ENCODE measurements at regions of chr11 and their contacts with region 1.

Region 1: DNA sequence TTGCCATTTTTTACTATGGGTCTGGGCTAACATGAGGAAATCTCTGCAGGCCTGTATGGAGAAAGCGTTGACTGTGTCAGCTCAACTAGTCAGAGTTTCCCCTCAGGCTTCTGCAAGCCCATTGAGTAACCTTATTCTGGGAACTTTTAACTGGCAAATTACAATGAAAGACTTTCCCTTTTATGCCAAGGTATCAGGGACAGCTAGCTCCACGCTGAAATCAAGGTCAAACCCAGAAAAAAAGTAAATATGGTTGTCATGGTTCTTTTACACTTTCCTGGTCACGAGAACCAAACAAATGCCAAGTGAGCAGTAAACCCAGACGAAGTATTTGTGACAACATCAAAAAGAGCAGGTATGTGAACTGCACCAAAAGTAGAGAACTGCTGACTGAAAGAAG is 13.8 kb downstream of the OSBP start:
- DNase-seq: no peak
- H3K4me3 ChIP-seq: no peak overlapping the region
- H3K27ac ChIP-seq: no peak overlapping the region
- H3K4me1 ChIP-seq: no peaks in the 10 kb centered on the region
- H3K27me3 ChIP-seq: no peaks in the 10 kb centered on the region
- CTCF ChIP-seq: no peak

Region 2: DNA sequence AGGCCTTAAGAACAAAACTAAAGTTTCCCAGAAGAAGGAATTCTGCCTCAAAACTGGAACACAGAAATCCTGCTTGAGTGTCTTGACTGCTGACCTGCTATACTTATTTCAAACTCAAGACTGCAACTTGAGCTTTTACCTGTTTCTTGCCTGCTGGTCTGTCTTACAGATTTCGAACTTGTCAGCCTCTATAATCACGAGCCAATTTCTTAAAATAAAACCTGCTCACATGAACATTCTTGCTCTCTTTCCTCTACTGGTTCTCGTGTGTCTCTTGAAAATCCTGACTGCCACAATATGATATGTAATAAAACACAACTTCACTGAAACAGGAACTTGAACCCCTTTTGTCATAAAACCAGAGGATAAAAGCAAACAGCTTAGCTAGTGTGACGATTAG is 53.1 kb after region 1 on chr11:
- CTCF ChIA-PET with region 1: no interaction called
- POLR2A ChIA-PET with region 1: no interaction called
- intact Hi-C with region 1: loop called (anchors 5 kb)
- DNase-seq: no peak
- H3K4me3 ChIP-seq: no peak overlapping the region
- H3K27ac ChIP-seq: no peak overlapping the region
- H3K4me1 ChIP-seq: no peaks in the 10 kb centered on the region
- H3K27me3 ChIP-seq: no peaks in the 10 kb centered on the region
- CTCF ChIP-seq: no peak